ENCODE measurements at regions of chr11 and their contacts with region 1.

Region 1: GRCh38 chr11:2912498-2912897 is 16.7 kb downstream of the PHLDA2 start:
- DNase-seq: peak; percentile 87
- ATAC-seq: peak; percentile 86
- H3K4me3 ChIP-seq: peak overlapping the region; percentile 37 to 54
- H3K27ac ChIP-seq: peak overlapping the region; percentile 97
- H3K4me1 ChIP-seq: peaks cover 49 to 55% of the 10 kb centered on the region in 2 experiments
- H3K27me3 ChIP-seq: no peaks in the 10 kb centered on the region
- CTCF ChIP-seq: no peak
- POLR2A ChIP-seq: no peak
- RAD21 ChIP-seq: no peak

Region 2: DNA sequence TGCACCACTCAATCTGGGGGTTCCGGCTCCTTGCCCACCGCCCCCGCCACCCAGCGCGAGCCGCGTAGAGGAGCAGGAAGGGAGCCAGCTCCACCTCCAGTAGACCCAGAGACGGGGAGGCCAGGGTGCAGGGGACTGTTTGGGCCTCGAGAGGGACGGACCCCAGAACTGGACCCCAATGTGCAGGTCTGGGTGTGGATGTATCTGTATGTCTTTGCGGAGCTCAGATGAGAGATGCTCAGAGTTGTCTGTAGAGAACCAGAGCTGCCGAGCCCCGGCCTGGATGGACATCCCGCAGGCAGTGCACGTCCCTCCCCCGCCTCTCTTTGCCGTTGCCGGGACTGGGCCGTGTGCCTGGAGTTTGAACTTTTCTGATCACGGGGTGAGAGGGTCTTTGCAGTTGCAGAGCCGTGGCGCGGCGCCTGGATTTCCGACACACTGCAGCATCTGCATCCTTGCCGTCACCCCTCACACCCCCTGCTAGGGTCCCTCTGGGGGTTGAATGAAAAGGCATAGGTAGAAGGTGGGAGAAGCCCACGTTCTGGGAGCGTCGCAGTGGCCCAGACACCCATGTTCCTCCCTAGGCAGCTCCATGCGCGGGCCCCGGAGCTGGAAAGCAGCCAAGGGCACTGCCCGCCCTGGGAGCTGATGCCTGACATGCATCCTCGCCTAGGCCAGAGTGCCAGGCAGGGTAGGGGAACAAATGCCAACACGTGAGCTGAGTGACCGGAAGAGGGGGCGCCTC is 362.4 kb before region 1 on chr11:
- CTCF ChIA-PET with region 1: no interaction called
- POLR2A ChIA-PET with region 1: no interaction called
- RAD21 ChIA-PET with region 1: no interaction called
- intact Hi-C with region 1: no loop called
- DNase-seq: no peak
- ATAC-seq: no peak
- H3K4me3 ChIP-seq: no peak overlapping the region
- H3K27ac ChIP-seq: no peak overlapping the region
- H3K4me1 ChIP-seq: no peaks in the 10 kb centered on the region
- H3K27me3 ChIP-seq: no peaks in the 10 kb centered on the region
- CTCF ChIP-seq: no peak
- POLR2A ChIP-seq: no peak
- RAD21 ChIP-seq: no peak

Region 3: GRCh38 chr11:2892215-2893020 is 20.1 kb before region 1 on chr11:
- CTCF ChIA-PET with region 1: interaction called, 19 read pairs
- POLR2A ChIA-PET with region 1: interaction called, 3 read pairs
- RAD21 ChIA-PET with region 1: interaction called in 1 of 2 experiments, 6 read pairs
- intact Hi-C with region 1: no loop called
- DNase-seq: no peak
- ATAC-seq: peak; percentile 65
- H3K4me3 ChIP-seq: peak overlapping the region; percentile 50 to 72
- H3K27ac ChIP-seq: peak overlapping the region; percentile 75
- H3K4me1 ChIP-seq: peaks cover 31 to 58% of the 10 kb centered on the region in 2 experiments
- H3K27me3 ChIP-seq: no peaks in the 10 kb centered on the region
- CTCF ChIP-seq: peak in 2 of 3 experiments; percentile 95 to 96; a peak in 4 of 6 replicates
- POLR2A ChIP-seq: peak; percentile 64
- RAD21 ChIP-seq: no peak

Region 4: DNA sequence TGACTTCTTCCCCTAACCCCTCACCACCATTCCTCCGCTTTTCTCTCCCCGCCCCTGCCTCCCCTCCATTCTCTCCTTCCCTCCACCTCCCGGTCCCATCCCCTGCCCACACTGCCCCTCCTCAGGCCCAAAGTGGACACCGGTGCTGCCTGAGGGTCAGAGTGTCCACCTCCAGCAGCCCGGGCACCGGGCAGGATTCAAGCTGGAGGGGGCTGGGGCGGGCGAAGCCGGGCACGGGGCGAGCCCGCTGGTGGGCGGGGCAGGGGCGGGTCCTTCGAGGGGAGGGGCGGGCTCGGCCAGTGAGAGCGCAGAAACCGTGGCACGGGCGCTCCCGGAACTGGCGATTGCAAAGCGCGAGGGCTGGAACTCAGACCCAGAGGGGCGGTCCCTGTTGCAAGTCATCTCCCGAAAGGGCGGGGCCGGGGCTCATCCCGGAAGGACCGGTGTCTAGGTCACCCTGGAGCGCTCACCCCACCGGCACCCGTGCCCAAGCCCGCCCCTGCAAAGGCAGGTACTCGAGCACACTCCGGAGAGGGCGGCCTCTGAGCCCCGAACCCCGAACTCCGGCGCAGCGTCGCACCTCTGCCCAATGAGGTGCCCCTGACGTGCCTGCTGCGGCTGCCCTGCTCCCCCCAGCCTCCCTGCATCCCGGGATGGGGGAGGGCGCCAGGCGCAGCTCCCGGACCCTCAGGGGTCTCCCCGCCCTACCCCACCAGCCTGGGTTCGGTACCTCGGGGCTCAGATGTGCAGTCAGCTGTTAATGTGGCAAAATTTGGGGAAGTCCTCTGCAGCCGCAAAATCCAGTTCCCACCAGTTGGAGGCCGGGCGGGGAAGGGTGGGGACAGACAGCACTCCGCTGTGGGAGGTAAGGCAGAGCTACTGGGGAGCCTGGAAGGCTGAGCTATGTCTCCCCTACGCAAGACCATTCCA is 10.4 kb before region 1 on chr11:
- CTCF ChIA-PET with region 1: no interaction called
- POLR2A ChIA-PET with region 1: interaction called, 12 read pairs
- RAD21 ChIA-PET with region 1: interaction called in 1 of 2 experiments, 3 read pairs
- intact Hi-C with region 1: no loop called
- DNase-seq: peak; percentile 74
- ATAC-seq: peak; percentile 80
- H3K4me3 ChIP-seq: peak overlapping the region; percentile 70 to 76
- H3K27ac ChIP-seq: peak overlapping the region; percentile 86
- H3K4me1 ChIP-seq: peaks cover 54 to 72% of the 10 kb centered on the region in 2 experiments
- H3K27me3 ChIP-seq: no peaks in the 10 kb centered on the region
- CTCF ChIP-seq: no peak
- POLR2A ChIP-seq: no peak
- RAD21 ChIP-seq: no peak

Measured in HCT116 (cell line).